ENCODE measurements at regions of chr7 and their contacts with region 1.

Region 1: GRCh38 chr7:150620617-150621371 is 11.4 kb downstream of the GIMAP6 start:
- DNase-seq: no peak
- H3K4me3 ChIP-seq: no peak overlapping the region
- H3K4me3 Mint-ChIP-seq: peak overlapping the region in 5 of 7 donors; percentile 3 to 57 (median 32)
- H3K27ac ChIP-seq: no peak overlapping the region
- H3K27ac Mint-ChIP-seq: peak overlapping the region; percentile 31 to 88 (median 72)
- H3K4me1 ChIP-seq: peaks cover 18% of the 10 kb centered on the region
- H3K4me1 Mint-ChIP-seq: peaks cover 55 to 83% (median 75%) of the 10 kb centered on the region in 3 donors
- H3K27me3 ChIP-seq: no peaks in the 10 kb centered on the region
- H3K27me3 Mint-ChIP-seq: no peaks in the 10 kb centered on the region

Region 2: DNA sequence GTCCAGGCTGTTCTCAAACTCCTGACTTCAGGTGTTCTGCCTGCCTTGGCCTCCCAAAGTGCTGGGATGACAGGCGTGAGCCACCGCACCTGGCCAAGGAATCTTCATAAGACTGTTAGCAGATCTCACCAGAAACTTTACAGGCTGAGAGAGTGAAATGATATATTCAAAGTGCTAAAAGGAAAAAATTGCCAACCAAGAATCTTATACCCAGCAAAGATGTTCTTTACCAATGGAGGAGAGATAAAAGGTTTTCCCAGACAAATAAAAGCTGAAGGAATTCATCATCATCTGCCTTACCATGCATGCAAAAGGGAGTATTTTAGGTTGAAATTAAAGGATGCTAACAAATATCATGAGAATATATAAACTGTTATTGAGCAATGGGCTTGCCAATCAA is 82.5 kb before region 1 on chr7:
- CTCF ChIA-PET with region 1: no interaction called
- POLR2A ChIA-PET with region 1: no interaction called
- DNase-seq: no peak
- H3K4me3 ChIP-seq: no peak overlapping the region
- H3K4me3 Mint-ChIP-seq: no peak overlapping the region
- H3K27ac ChIP-seq: no peak overlapping the region
- H3K27ac Mint-ChIP-seq: no peak overlapping the region
- H3K4me1 ChIP-seq: no peaks in the 10 kb centered on the region
- H3K4me1 Mint-ChIP-seq: peaks cover 4 to 25% (median 5%) of the 10 kb centered on the region in 3 donors
- H3K27me3 ChIP-seq: no peaks in the 10 kb centered on the region
- H3K27me3 Mint-ChIP-seq: no peaks in the 10 kb centered on the region

Region 3: GRCh38 chr7:150631866-150632864 is 11.4 kb after region 1 on chr7 and contains the start of gene GIMAP6:
- CTCF ChIA-PET with region 1: interaction called, 3 read pairs
- POLR2A ChIA-PET with region 1: interaction called, 13 read pairs
- DNase-seq: peak; percentile 10 to 59 (median 47)
- H3K4me3 ChIP-seq: peak within 1 kb of the TSS; percentile 67
- H3K4me3 Mint-ChIP-seq: peak within 1 kb of the TSS; percentile 95 to 100 (median 97)
- H3K27ac ChIP-seq: peak within 1 kb of the TSS; percentile 47
- H3K27ac Mint-ChIP-seq: peak within 1 kb of the TSS; percentile 90 to 98 (median 94)
- H3K4me1 ChIP-seq: peaks cover 67% of the 10 kb centered on the region
- H3K4me1 Mint-ChIP-seq: peaks cover 83 to 89% (median 87%) of the 10 kb centered on the region in 3 donors
- H3K27me3 ChIP-seq: no peaks in the 10 kb centered on the region
- H3K27me3 Mint-ChIP-seq: no peaks in the 10 kb centered on the region
- total RNA-seq, gene GIMAP6: 44.9 to 45.8 TPM

Region 4: DNA sequence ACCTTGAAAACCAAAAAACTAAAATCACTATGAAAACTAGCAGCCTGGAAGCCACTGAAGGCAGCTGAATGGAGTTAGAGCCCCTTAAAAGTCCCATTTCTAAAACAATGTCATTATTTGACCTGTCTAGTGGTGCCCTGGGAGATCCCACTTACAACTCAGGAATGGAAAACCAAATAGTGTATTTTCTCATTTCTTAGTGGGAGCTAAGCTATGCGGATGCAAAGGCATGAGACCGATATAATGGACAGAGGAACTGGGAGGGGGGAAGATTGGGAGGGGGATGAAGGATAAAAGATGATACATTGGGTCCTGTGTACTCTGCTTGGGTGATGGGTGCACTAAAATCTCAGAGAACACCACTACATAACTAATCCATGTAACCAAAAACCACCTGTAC is 54.9 kb after region 1 on chr7:
- CTCF ChIA-PET with region 1: no interaction called
- POLR2A ChIA-PET with region 1: interaction called, 10 read pairs
- DNase-seq: no peak
- H3K4me3 ChIP-seq: peak overlapping the region; percentile 27
- H3K4me3 Mint-ChIP-seq: peak overlapping the region; percentile 6 to 70 (median 52)
- H3K27ac ChIP-seq: no peak overlapping the region
- H3K27ac Mint-ChIP-seq: peak overlapping the region; percentile 79 to 100 (median 90)
- H3K4me1 ChIP-seq: peaks cover 57% of the 10 kb centered on the region
- H3K4me1 Mint-ChIP-seq: peaks cover 73 to 90% (median 87%) of the 10 kb centered on the region in 3 donors
- H3K27me3 ChIP-seq: no peaks in the 10 kb centered on the region
- H3K27me3 Mint-ChIP-seq: no peaks in the 10 kb centered on the region

Measured in CD8-positive, alpha-beta memory T cell (primary cell).